Transverse colon (tissue), 4 donors: ENCODE measurements at regions of chr21 and their contacts with region 1.

Region 1: DNA sequence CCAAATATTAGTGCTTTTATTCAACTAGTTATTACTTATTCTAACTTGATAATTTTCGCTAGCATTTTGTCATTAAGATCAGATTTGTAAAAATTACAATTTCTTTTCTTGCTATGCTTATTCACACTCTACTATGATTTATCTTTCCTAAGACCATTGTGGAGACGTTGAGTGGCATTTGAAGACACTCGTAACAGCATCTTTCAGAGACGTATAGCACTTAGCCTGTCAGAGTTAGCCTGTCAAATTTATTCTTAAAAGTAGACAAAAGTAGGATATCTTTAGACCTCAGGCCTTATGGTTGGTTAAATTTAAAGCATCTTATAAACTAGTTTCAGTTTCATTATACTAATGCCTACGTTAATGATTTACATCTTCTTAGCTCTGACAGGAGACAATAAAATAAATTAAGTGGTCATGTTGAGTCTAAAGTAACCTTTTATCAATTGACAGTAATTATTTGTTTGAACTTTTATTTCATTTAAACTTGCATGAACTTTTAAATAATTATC is 1410.1 kb downstream of the MRPL39 start:
- DNase-seq: no peak
- H3K4me3 ChIP-seq: no peak overlapping the region
- H3K27ac ChIP-seq: no peak overlapping the region
- H3K4me1 ChIP-seq: no peaks in the 10 kb centered on the region
- H3K27me3 ChIP-seq: no peaks in the 10 kb centered on the region
- CTCF ChIP-seq: no peak
- EP300 ChIP-seq: no peak
- POLR2A ChIP-seq: no peak

Region 2: DNA sequence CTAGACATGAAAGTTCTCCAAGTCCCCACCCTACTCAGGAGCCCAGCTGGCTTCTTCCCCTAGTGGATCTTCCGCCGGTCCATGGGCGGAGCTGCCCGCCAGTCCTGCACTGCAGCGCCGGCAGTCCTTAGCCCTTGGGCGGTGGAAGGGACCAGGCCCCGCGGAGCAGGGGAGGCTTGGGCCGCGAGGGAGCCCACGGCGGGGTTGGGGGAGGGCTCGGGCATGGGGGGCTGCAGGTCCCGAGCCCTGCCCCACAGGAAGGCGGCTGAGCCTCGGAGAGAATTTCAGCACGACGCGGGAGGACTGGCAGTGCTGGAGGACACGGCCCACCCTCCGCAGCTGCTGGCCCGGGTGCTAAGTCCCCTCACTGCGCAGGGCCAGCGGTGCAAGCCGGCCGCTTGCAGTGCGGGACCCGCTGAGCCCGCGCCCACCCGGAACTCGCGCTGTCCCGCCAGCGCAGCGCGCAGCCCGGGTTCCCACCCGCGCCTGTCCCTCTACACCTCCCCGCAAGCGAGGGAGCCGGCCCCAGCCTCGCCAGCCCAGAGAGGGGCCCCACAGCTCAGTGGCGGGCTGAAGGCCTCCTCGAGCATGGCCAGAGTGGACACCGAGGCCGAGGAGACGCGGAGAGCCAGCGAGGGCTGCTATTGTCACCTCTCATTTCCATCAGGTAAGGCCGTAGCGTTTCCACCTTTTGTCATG is 11.5 kb after region 1 on chr21:
- in situ Hi-C with region 1: no loop called
- intact Hi-C with region 1: no loop called
- DNase-seq: no peak
- H3K4me3 ChIP-seq: no peak overlapping the region
- H3K27ac ChIP-seq: no peak overlapping the region
- H3K4me1 ChIP-seq: no peaks in the 10 kb centered on the region
- H3K27me3 ChIP-seq: no peaks in the 10 kb centered on the region
- CTCF ChIP-seq: no peak
- EP300 ChIP-seq: no peak
- POLR2A ChIP-seq: no peak

Region 3: DNA sequence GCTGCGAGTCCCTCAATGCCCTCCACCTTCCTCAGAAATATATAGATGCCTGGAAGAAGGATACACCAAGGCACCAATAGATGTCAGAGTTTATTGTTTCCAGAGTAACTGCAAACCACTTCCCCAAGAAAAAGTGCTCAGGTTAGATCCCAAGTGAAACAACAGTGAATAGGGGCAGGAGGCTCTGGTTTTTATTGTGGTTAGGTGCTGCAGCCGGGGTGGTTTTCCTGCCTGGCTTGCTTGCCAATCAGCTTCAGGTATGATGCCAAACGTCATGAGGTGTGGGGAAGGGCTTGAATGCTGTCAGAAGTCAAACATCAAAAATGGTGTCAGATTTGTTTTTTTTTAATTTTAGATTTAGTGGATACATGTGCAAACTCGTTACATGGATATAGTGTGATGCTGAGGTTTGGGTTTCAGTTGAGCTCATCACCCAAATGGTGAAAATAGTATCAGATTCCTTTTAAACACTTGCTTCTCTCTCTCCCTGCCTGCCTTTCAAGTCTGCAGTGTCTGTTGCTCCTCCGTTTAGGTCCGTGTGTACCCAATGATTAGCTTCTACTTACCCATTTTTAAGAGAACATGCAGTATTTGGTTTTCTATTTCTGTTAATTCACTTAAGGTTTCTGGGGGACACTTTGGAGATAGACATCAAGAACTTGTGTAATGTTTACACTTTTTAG is 93.1 kb after region 1 on chr21:
- in situ Hi-C with region 1: loop called in 1 of 4 experiments (anchors 25 kb)
- intact Hi-C with region 1: no loop called
- DNase-seq: no peak
- H3K4me3 ChIP-seq: no peak overlapping the region
- H3K27ac ChIP-seq: no peak overlapping the region
- H3K4me1 ChIP-seq: no peaks in the 10 kb centered on the region
- H3K27me3 ChIP-seq: no peaks in the 10 kb centered on the region
- CTCF ChIP-seq: no peak
- EP300 ChIP-seq: no peak
- POLR2A ChIP-seq: no peak